BJ (cell line): ENCODE measurements at regions of chr1 and their contacts with region 1.

Region 1: GRCh38 chr1:178093205-178093957 is 523 bp upstream of the RASAL2 start:
- DNase-seq: peak; percentile 83
- H3K4me3 ChIP-seq: peak overlapping the region; percentile 98
- H3K27me3 ChIP-seq: no peaks in the 10 kb centered on the region
- CTCF ChIP-seq: no peak; the same call in 1 of the 2 replicates

Region 2: DNA sequence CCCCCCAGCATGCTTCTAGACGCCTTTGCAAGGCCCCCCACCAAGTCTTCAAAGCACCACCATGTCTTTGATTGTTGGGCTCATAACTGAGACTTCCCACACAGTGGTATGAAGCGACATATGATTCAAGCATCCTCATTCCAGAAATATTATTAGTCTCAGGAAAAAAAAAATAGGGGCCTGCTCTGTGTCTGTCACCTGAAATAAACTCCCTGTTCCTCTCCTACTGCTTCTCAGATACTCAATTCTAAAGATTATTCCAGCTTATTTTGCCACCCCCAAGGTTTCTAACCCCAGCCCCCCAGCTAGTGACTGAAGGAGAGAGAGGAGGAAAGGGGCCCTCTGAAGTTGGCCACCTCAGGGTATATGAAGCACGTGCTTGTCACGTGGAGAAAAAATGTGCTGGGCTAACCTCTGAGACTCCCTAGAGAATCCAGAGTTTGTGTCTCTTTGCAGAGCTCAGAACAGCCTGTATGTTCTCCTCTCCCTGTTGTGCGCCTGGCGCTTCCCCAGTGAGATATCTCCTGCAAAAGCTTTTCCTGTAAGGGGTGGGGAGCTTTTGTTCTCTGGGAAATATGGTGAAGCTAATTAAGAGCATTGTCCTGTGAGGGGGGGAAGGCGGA is 35.4 kb before region 1 on chr1:
- CTCF ChIA-PET with region 1: interaction called, 15 read pairs
- POLR2A ChIA-PET with region 1: no interaction called
- DNase-seq: no peak
- H3K4me3 ChIP-seq: no peak overlapping the region
- H3K27me3 ChIP-seq: no peaks in the 10 kb centered on the region
- CTCF ChIP-seq: no peak

Region 3: DNA sequence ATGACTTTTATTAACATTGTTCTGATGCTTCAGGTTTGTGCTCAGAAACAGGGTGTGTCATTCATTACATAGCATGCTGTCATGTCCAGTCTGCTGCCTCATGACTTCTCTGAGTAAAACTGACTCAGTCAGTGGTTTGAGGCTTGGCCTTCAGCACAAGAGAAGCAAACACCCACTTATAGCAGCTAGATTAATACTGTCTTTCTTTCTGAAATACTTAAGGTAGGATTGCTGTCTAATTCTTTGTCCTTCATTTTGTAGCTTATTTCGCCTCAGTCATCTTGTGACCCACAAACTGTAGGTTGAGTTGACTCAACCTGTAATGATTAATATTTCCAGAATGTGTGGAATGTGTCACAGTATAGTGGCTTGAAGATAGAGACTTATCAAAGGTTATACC is 33.4 kb after region 1 on chr1:
- CTCF ChIA-PET with region 1: no interaction called
- POLR2A ChIA-PET with region 1: no interaction called
- DNase-seq: peak; percentile 59
- H3K4me3 ChIP-seq: no peak overlapping the region
- H3K27me3 ChIP-seq: no peaks in the 10 kb centered on the region
- CTCF ChIP-seq: no peak